ENCODE measurements at regions of chr9 and their contacts with region 1.

Region 1: DNA sequence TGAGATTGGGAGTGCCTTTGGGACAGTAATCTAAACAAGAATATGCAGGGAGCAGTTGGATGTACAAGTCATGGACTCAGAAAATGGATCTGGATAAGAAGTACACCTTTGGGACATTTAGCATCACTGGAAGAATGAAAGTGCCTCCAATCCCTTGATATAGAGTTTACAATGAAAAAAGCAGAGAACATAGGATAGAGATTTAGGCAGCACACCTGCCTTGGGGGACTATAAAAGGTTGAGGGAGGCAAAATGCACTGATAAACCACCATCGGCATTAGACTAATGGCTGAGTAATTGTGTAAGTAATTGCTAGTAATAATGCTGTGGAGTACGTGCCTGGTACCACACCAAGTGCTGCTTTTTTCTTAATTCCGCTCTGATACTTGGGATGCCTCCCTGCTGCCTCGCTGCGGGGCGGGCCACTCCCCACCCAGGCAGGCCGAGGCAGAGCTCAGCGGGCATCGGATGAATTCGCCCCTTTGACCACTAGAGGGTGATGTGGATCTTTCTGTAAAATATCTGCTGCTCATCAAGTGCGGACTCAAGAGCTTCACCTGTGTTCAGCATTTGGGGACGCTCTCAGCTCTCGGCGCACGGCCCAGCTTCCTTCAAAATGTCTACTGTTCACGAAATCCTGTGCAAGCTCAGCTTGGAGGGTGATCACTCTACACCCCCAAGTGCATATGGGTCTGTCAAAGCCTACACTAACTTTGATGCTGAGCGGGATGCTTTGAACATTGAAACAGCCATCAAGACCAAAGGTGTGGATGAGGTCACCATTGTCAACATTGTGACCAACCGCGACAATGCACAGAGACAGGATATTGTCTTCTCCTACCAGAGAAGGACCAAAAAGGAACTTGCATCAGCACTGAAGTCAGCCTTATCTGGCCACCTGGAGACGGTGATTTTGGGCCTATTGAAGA is 99.9 kb downstream of the ANKRD18B start:
- DNase-seq: peak; percentile 80
- ATAC-seq: peak; percentile 97
- H3K4me3 Mint-ChIP-seq: no peak overlapping the region
- H3K27ac Mint-ChIP-seq: no peak overlapping the region
- H3K4me1 Mint-ChIP-seq: peaks cover 7% of the 10 kb centered on the region
- H3K27me3 Mint-ChIP-seq: peaks cover 19% of the 10 kb centered on the region
- CTCF ChIP-seq: peak; percentile 80

Region 2: GRCh38 chr9:33452828-33453271 is 171.1 kb before region 1 on chr9:
- CTCF ChIA-PET with region 1: interaction called, 10 read pairs
- POLR2A ChIA-PET with region 1: no interaction called
- DNase-seq: peak; percentile 88
- ATAC-seq: peak; percentile 97
- H3K4me3 Mint-ChIP-seq: no peak overlapping the region
- H3K27ac Mint-ChIP-seq: no peak overlapping the region; the same call in 1 of the 2 replicates
- H3K4me1 Mint-ChIP-seq: peaks cover 16% of the 10 kb centered on the region
- H3K27me3 Mint-ChIP-seq: peaks cover 10% of the 10 kb centered on the region
- CTCF ChIP-seq: peak; percentile 62

Region 3: DNA sequence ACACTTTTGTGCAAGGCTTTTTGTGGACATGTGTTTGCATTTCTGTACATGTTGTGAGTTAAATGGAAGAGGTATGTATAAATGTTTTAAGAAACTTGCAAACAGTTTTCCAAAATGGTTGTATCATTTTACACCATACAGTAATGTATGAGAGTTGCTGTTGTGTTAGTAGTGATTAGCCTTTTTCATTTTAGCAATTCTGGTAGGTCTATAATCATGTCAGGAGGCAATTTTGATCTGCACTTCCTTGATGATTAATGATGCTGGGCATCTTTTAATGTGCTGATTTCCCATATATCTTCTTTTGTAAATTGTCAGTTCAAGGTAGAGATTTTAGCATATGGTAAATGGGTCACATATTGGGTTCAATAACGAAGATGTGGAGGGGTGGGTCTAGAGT is 12.6 kb before region 1 on chr9:
- CTCF ChIA-PET with region 1: interaction called, 10 read pairs
- POLR2A ChIA-PET with region 1: no interaction called
- DNase-seq: no peak
- ATAC-seq: no peak
- H3K4me3 Mint-ChIP-seq: no peak overlapping the region
- H3K27ac Mint-ChIP-seq: no peak overlapping the region
- H3K4me1 Mint-ChIP-seq: no peaks in the 10 kb centered on the region
- H3K27me3 Mint-ChIP-seq: no peaks in the 10 kb centered on the region; the same call in none of the 2 replicates
- CTCF ChIP-seq: no peak

Region 4: DNA sequence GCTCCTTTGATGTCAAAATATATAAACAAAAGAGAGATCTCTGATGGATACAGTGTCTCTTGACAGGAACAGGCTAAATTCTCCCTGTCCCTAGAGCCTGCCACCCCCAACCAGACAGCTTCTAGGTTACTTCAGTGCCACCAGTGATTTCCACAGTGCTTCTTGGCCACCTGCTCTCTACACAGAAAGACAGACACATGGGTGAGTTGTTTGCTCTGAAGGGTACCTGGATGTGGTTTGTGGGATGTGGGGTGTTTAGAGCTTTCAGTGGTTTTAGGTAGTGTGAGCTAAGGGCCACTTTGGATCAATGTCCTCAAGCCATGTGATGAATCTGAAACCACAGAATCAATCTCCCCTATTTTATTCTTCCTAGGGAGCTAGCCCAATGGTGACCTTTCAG is 25.5 kb after region 1 on chr9:
- CTCF ChIA-PET with region 1: interaction called, 48 read pairs
- POLR2A ChIA-PET with region 1: no interaction called
- DNase-seq: no peak
- ATAC-seq: no peak
- H3K4me3 Mint-ChIP-seq: no peak overlapping the region
- H3K27ac Mint-ChIP-seq: no peak overlapping the region
- H3K4me1 Mint-ChIP-seq: no peaks in the 10 kb centered on the region
- H3K27me3 Mint-ChIP-seq: peaks cover 4% of the 10 kb centered on the region; the same call in 1 of the 2 replicates
- CTCF ChIP-seq: no peak

Region 5: GRCh38 chr9:33721674-33722358 is 97.9 kb after region 1 on chr9:
- CTCF ChIA-PET with region 1: interaction called, 207 read pairs
- POLR2A ChIA-PET with region 1: no interaction called
- DNase-seq: peak; percentile 92
- ATAC-seq: peak; percentile 78
- H3K4me3 Mint-ChIP-seq: no peak overlapping the region; the same call in 1 of the 2 replicates
- H3K27ac Mint-ChIP-seq: no peak overlapping the region
- H3K4me1 Mint-ChIP-seq: peaks cover 2% of the 10 kb centered on the region
- H3K27me3 Mint-ChIP-seq: peaks cover 24% of the 10 kb centered on the region
- CTCF ChIP-seq: peak; percentile 100

Region 6: DNA sequence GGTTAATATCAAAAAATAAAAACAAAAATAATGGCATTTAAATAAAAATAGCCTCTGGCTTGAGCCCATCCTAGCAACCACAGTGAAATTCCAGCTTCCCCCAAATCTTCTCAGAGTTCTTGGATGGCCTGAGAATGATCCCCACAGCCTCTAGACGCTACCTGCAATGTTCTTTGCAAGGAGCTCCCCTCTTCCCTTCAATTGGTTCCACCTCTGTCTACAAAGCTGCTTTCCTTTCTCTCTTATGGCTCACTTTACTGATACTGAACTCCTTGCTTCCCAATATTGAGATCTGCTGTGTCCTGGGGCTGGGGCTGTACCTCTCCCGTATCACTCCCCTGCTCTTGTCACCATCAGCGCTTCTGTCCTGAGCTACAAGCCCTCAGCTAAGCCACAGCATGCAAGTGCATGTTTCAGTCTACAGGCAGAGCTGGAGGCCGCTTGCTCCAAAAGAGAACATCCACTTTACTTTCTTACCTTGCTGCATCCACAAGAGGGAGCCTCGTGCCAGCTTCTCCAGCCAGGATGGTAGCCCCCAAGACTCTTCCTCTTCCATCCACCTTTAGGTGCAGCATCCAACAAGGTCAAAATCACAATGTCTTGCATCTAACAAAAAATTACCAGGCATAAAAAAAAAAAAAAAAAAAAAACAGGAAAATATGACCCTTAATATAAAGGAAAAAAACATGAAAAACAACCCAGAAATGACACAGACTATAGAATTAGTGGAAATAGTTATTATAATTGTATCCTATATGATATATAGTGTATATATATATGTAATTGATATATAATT is 114.1 kb after region 1 on chr9:
- CTCF ChIA-PET with region 1: interaction called, 53 read pairs
- POLR2A ChIA-PET with region 1: interaction called, 3 read pairs
- DNase-seq: peak; percentile 64
- ATAC-seq: peak; percentile 99
- H3K4me3 Mint-ChIP-seq: no peak overlapping the region
- H3K27ac Mint-ChIP-seq: no peak overlapping the region
- H3K4me1 Mint-ChIP-seq: peaks cover 2% of the 10 kb centered on the region
- H3K27me3 Mint-ChIP-seq: no peaks in the 10 kb centered on the region
- CTCF ChIP-seq: peak; percentile 48; the same call in 1 of the 2 replicates

Measured in WTC11 (cell line).